ENCODE measurements at regions of chr12 and their contacts with region 1.

Region 1: DNA sequence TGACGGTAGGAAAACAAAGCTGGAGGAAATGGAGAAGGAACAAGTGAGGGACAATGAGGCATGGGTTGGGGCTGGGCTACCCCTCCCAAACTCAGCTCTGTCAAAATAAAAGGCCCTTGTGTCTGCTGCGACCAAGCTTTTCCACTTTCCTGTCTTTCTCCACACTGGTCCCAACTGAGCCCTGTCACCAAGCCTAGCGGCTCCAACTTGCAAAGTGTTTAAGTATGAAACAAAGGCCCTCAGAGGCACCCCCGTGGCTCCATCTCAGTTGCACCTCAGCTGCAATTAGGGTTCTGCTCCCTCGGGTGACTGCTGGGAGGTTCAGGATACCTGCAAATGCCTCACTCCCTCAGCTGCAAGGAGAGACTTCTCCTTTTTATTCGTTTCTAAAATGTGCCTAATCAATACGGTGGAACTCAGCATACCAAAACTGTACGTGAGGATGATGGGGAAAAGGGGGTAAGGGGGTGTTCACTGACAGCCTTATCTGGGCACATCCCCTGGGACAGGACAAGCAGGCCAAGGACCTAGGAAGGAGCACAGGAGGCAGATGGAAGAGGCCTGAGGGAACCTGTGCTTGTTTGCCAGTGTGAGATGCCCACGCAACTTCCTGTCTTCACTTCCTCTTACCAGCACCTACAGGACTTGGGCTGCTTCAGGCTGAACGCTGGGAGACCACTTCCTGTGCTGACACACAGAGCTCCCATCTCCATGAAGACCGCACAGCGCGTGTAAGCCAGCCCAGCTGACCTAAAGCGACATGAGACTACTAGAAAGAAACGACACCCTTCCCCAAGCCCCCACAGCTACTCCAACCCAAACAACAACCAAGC is 8.9 kb downstream of the VAMP1 start:
- DNase-seq: peak; percentile 90 to 97 (median 95)
- H3K4me3 ChIP-seq: peak overlapping the region in 1 of 3 experiments; percentile 55
- H3K4me3 Mint-ChIP-seq: peak overlapping the region; percentile 51 to 82
- H3K27ac ChIP-seq: peak overlapping the region; percentile 71 to 85
- H3K27ac Mint-ChIP-seq: peak overlapping the region; percentile 84 to 97 (median 94)
- H3K4me1 ChIP-seq: peaks cover 51 to 59% of the 10 kb centered on the region in 2 donors
- H3K4me1 Mint-ChIP-seq: peaks cover 66% of the 10 kb centered on the region
- H3K27me3 ChIP-seq: no peaks in the 10 kb centered on the region
- H3K27me3 Mint-ChIP-seq: peaks cover 0 to 2% (median 1%) of the 10 kb centered on the region in 3 donors
- CTCF ChIP-seq: no peak

Region 2: GRCh38 chr12:6323340-6323994 is 138.2 kb before region 1 on chr12:
- intact Hi-C with region 1: loop called (anchors 5 kb)
- DNase-seq: peak; percentile 66 to 95 (median 89)
- H3K4me3 ChIP-seq: peak overlapping the region in 1 of 3 experiments; percentile 41
- H3K4me3 Mint-ChIP-seq: peak overlapping the region; percentile 72 to 82
- H3K27ac ChIP-seq: peak overlapping the region; percentile 17 to 38
- H3K27ac Mint-ChIP-seq: peak overlapping the region; percentile 81 to 95 (median 87)
- H3K4me1 ChIP-seq: peaks cover 39 to 50% of the 10 kb centered on the region in 2 donors
- H3K4me1 Mint-ChIP-seq: peaks cover 52% of the 10 kb centered on the region
- H3K27me3 ChIP-seq: peaks cover 0 to 4% of the 10 kb centered on the region in 2 donors
- H3K27me3 Mint-ChIP-seq: peaks cover 14 to 22% (median 21%) of the 10 kb centered on the region in 3 donors
- CTCF ChIP-seq: peak; percentile 72

Region 3: DNA sequence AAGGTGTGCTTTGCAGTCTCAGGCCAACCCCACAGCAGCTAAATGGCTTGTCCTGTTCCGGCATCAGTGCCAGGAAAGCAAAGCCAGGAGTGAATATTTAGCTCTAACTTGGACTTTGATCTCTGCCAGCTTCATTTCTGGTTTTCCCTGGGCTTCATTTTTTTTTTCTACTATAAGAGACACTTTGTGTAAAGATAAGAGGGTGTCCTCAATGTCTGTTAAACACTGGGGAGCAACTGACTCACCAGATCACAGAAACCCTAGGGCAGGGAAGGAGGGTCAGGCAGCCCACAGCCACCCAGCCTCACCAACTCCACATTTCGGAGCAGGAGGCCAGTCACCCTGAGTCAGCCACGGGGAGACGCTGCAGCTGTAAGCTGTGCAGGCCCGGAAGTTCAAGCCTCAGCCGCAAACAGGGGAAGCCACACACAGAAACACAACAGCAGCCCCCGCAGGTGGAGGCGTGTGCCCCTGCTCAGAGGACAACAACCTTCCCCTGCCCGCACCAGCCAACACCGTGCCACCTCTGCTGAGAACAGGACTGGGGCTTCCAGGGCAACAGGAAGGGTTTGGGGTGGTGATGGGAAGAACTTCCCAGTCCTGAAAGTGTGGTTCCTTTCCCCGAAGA is 126.1 kb before region 1 on chr12:
- intact Hi-C with region 1: loop called in 1 of 2 experiments (anchors 5 kb)
- DNase-seq: peak; percentile 77 to 88 (median 80)
- H3K4me3 ChIP-seq: peak overlapping the region; percentile 49 to 95 (median 90)
- H3K4me3 Mint-ChIP-seq: no peak overlapping the region
- H3K27ac ChIP-seq: peak overlapping the region; percentile 79 to 93
- H3K27ac Mint-ChIP-seq: no peak overlapping the region
- H3K4me1 ChIP-seq: peaks cover 90 to 97% of the 10 kb centered on the region in 2 donors
- H3K4me1 Mint-ChIP-seq: peaks cover 49% of the 10 kb centered on the region
- H3K27me3 ChIP-seq: no peaks in the 10 kb centered on the region
- H3K27me3 Mint-ChIP-seq: peaks cover 0 to 1% (median 0%) of the 10 kb centered on the region in 3 donors
- CTCF ChIP-seq: peak; percentile 58

Region 4: GRCh38 chr12:6423267-6424007 is 38.2 kb before region 1 on chr12:
- intact Hi-C with region 1: loop called in 1 of 2 experiments (anchors 5 kb)
- DNase-seq: peak; percentile 90 to 94 (median 93)
- H3K4me3 ChIP-seq: no peak overlapping the region
- H3K4me3 Mint-ChIP-seq: no peak overlapping the region
- H3K27ac ChIP-seq: peak overlapping the region in 1 of 2 donors; percentile 15
- H3K27ac Mint-ChIP-seq: peak overlapping the region in 4 of 7 donors; percentile 7 to 52 (median 26)
- H3K4me1 ChIP-seq: peaks cover 20 to 29% of the 10 kb centered on the region in 2 donors
- H3K4me1 Mint-ChIP-seq: peaks cover 22% of the 10 kb centered on the region
- H3K27me3 ChIP-seq: no peaks in the 10 kb centered on the region
- H3K27me3 Mint-ChIP-seq: peaks cover 0 to 4% (median 0%) of the 10 kb centered on the region in 3 donors
- CTCF ChIP-seq: peak; percentile 85

Region 5: GRCh38 chr12:6554168-6555017 is 92.8 kb after region 1 on chr12:
- intact Hi-C with region 1: loop called in 1 of 2 experiments (anchors 5 kb)
- DNase-seq: peak; percentile 60 to 77 (median 72)
- H3K4me3 ChIP-seq: peak overlapping the region; percentile 85 to 97 (median 90)
- H3K4me3 Mint-ChIP-seq: peak overlapping the region; percentile 88 to 100
- H3K27ac ChIP-seq: peak overlapping the region; percentile 54 to 91
- H3K27ac Mint-ChIP-seq: peak overlapping the region; percentile 88 to 93 (median 90)
- H3K4me1 ChIP-seq: peaks cover 64 to 78% of the 10 kb centered on the region in 2 donors
- H3K4me1 Mint-ChIP-seq: peaks cover 72% of the 10 kb centered on the region
- H3K27me3 ChIP-seq: no peaks in the 10 kb centered on the region
- H3K27me3 Mint-ChIP-seq: peaks cover 0 to 1% (median 0%) of the 10 kb centered on the region in 3 donors
- CTCF ChIP-seq: peak; percentile 68

Measured in CD14-positive monocyte (primary cell).